ENCODE measurements at regions of chr17 and their contacts with region 1.

Region 1: DNA sequence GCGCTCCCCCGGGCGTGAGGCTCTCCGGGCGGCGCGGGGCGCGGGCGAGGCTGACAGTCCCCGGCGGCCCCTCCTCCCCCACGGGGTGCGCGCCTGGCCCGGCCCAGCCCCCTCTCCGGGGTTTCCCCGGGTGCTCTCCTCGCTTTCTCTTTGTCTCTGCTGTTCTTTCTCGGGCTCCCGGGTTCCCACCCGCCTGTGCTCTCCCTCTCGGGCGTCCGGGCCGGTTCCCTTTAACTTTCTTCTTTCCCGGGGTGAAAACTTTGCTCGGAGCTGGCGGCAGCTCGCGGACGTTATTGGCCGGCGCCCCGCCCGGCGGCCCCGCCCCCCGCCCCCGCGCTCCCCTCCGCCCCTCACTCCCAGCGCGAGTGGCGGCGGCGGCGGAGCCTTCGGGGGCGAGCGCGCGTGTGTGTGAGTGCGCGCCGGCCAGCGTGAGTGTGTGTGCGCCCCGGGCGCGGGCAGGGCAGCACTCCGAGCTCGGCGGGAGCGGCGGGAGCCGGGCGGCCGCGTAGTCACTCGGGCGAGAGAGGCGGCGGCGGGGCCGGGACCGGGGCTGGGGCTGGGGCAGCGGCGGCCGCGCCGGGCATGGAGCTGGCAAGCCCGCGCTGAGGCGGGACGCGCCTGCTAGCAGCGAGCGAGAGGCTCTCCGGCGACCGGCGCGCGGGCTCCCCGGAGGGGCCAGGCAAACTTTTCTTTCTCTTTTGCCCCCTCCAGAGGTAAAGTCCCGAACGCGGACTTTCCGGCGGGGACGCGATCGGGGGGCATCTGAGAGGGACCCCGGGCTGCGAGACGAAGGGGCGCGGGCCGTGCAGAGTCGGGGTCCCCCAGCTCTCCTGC is at the start of gene NTN1:
- DNase-seq: peak; percentile 73
- ATAC-seq: peak; percentile 84
- H3K4me3 Mint-ChIP-seq: peak within 1 kb of the TSS; percentile 88
- H3K27ac Mint-ChIP-seq: peak within 1 kb of the TSS; percentile 72
- H3K4me1 Mint-ChIP-seq: peaks cover 23% of the 10 kb centered on the region
- H3K27me3 Mint-ChIP-seq: peaks cover 27% of the 10 kb centered on the region
- CTCF ChIP-seq: no peak
- total RNA-seq, gene NTN1: 1.0 and 1.1 TPM in 2 replicates

Region 2: DNA sequence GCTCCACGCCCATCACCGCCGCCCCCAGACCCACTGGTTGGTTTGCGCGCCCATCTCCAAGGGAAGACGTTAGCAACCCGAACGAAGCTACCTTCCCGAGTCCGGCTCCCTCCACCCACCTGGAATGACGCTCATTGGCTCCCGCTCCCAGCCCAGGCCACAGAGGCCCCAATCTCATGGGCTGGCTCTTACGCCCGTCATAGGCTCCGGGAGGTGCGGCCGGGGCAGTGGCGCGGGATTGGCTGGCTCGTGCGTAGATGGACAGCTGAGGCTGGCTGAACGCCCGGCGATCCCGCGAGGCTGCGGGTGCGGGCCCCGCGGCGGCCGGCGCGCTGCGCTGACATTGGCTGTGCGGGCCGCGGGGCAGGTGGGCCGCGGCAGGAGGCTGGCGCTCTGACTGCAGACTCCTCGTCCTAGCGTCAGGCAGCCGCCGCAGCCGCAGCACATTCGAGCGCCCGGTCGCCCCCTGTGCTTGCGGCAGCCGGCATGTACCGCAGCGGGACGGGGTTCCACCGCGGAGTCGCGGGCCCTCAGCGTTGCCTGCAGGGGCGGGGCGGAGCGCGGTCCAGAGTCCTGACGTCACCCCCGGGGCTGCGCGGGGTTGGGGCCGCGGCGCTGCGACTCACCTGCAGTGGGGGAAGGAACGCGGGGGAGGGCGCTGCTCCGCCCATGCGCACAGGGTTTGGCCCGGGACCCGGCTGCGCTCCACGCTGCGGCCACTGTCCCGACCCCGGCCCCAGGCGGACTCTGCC is 390.4 kb before region 1 on chr17:
- CTCF ChIA-PET with region 1: no interaction called
- POLR2A ChIA-PET with region 1: no interaction called
- intact Hi-C with region 1: loop called (anchors 10 kb)
- DNase-seq: peak; percentile 78
- ATAC-seq: peak; percentile 97
- H3K4me3 Mint-ChIP-seq: peak overlapping the region; percentile 97
- H3K27ac Mint-ChIP-seq: no peak overlapping the region
- H3K4me1 Mint-ChIP-seq: peaks cover 19% of the 10 kb centered on the region
- H3K27me3 Mint-ChIP-seq: peaks cover 37% of the 10 kb centered on the region
- CTCF ChIP-seq: no peak

Region 3: DNA sequence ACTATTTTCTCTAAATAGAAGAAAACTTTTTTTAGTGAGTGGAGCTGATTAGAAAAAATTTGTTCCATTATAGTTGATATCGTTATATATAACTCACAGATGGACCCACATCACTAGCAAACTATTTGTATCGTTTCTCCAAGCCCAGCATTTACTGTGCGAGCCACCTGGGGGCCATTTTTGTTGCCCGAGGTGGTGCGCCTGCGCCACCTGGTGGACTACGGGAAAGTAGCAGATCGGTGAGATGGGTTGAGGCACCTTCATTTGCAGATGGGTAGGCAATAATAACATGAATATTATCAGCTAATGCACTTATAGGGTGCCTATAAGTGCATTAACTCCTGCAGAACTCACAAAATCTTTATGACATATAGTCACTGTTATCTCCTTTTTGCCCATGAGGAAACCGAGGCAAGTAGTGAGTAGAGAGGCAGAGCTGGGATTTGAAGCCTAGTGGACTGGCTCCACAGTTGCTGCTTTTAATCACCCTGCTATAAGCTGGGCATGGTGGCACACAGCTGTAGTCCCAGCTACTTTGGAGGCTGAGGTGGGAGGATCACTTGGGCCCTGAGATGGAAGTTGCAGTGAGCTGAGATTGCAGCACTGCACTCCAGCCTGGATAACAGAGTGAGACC is 23.3 kb before region 1 on chr17:
- CTCF ChIA-PET with region 1: interaction called, 5 read pairs
- POLR2A ChIA-PET with region 1: interaction called, 5 read pairs
- intact Hi-C with region 1: loop called (anchors 1 kb)
- DNase-seq: peak; percentile 72
- ATAC-seq: peak; percentile 74
- H3K4me3 Mint-ChIP-seq: no peak overlapping the region
- H3K27ac Mint-ChIP-seq: no peak overlapping the region
- H3K4me1 Mint-ChIP-seq: peaks cover 22% of the 10 kb centered on the region
- H3K27me3 Mint-ChIP-seq: peaks cover 10% of the 10 kb centered on the region
- CTCF ChIP-seq: peak; percentile 73

Region 4: GRCh38 chr17:9239793-9240658 is 218.7 kb after region 1 on chr17:
- CTCF ChIA-PET with region 1: no interaction called
- POLR2A ChIA-PET with region 1: no interaction called
- intact Hi-C with region 1: loop called (anchors 1 kb)
- DNase-seq: peak; percentile 75
- ATAC-seq: peak; percentile 86
- H3K4me3 Mint-ChIP-seq: peak overlapping the region; percentile 82
- H3K27ac Mint-ChIP-seq: peak overlapping the region; percentile 53
- H3K4me1 Mint-ChIP-seq: peaks cover 15% of the 10 kb centered on the region
- H3K27me3 Mint-ChIP-seq: no peaks in the 10 kb centered on the region
- CTCF ChIP-seq: no peak

Region 5: DNA sequence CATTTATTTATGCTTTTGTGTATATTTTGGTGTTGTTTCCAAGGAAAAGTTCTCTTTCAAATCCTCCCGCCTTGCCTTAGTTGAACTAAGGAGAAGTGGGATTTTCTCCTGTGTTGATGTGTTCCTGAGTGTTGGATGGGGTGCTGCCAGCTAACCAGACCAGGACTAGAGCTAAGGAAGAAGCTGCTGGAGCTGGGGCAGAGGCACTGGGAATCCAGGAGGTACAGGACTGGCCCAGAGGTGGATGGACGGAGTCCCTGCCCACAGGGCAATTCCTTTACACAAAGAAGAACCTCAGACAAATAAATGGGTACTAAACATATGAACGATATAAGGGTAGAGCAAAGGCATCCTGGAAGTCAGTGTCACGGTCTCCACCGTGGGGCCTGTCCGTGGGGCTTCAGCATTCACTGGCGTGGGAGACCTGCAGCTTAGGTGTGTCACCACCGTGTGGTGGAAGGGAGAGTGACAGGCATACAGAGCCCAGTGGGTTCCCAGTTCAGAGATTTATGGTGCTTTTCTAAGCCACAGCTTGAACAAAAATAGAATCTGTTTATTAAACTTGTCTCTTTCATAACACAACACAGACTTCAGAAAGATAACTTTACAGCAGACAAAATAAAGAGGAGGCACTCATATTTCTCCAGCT is 270.7 kb after region 1 on chr17:
- CTCF ChIA-PET with region 1: no interaction called
- POLR2A ChIA-PET with region 1: no interaction called
- intact Hi-C with region 1: loop called (anchors 5 kb)
- DNase-seq: no peak
- ATAC-seq: peak; percentile 72
- H3K4me3 Mint-ChIP-seq: no peak overlapping the region
- H3K27ac Mint-ChIP-seq: no peak overlapping the region
- H3K4me1 Mint-ChIP-seq: peaks cover 25% of the 10 kb centered on the region
- H3K27me3 Mint-ChIP-seq: no peaks in the 10 kb centered on the region
- CTCF ChIP-seq: peak; percentile 41